Ascending aorta (tissue), 2 donors: ENCODE measurements at regions of chrX and their contacts with region 1.

Region 1: GRCh38 chrX:73562984-73563737 is at the start of gene CHIC1:
- DNase-seq: peak; percentile 9 to 77
- H3K4me3 ChIP-seq: peak within 1 kb of the TSS; percentile 51 to 71
- H3K27ac ChIP-seq: peak within 1 kb of the TSS; percentile 84 to 91
- H3K4me1 ChIP-seq: no peaks in the 10 kb centered on the region
- H3K27me3 ChIP-seq: no peaks in the 10 kb centered on the region
- CTCF ChIP-seq: no peak
- total RNA-seq, gene CHIC1: 3.7 TPM

Region 2: GRCh38 chrX:73214426-73215094 is 348.6 kb before region 1 on chrX and contains the start of gene NAP1L2:
- intact Hi-C with region 1: loop called (anchors 10 kb)
- DNase-seq: peak in 1 of 2 donors; percentile 63
- H3K4me3 ChIP-seq: peak within 1 kb of the TSS; percentile 32 to 72
- H3K27ac ChIP-seq: peak within 1 kb of the TSS; percentile 59 to 66
- H3K4me1 ChIP-seq: no peaks in the 10 kb centered on the region
- H3K27me3 ChIP-seq: no peaks in the 10 kb centered on the region
- CTCF ChIP-seq: no peak
- total RNA-seq, gene NAP1L2: 0.11 TPM

Region 3: DNA sequence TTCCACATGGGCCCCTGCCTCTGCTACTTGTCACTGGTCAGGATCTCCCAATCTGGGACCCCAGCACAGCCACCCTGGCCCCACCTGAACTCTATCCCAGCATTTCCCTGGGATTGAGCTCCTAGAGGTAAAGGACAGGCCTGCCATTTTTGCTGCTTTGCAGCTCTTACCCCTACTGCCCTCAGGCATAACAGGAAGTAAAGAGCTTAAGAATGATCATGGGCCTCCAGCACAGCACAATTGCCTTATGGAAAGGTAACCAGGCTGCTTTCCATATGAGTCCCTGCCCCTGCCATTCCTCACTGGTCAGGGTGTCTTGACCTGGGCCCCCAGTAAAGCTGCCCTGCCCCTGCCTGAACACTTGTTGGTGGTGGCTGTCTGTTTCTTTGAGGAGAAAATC is 486.0 kb after region 1 on chrX:
- intact Hi-C with region 1: no loop called
- DNase-seq: no peak
- H3K4me3 ChIP-seq: no peak overlapping the region
- H3K27ac ChIP-seq: no peak overlapping the region
- H3K4me1 ChIP-seq: no peaks in the 10 kb centered on the region
- H3K27me3 ChIP-seq: no peaks in the 10 kb centered on the region
- CTCF ChIP-seq: no peak

Region 4: GRCh38 chrX:74291964-74292807 is 729.0 kb after region 1 on chrX:
- intact Hi-C with region 1: loop called (anchors 5 kb)
- DNase-seq: peak; percentile 73 to 94
- H3K4me3 ChIP-seq: peak overlapping the region; percentile 57 to 71
- H3K27ac ChIP-seq: peak overlapping the region; percentile 73 to 87
- H3K4me1 ChIP-seq: no peaks in the 10 kb centered on the region
- H3K27me3 ChIP-seq: no peaks in the 10 kb centered on the region
- CTCF ChIP-seq: peak in 1 of 3 experiments; percentile 17